ENCODE measurements at regions of chr1 and their contacts with region 1.

Region 1: GRCh38 chr1:171245458-171246064 is 2.7 kb upstream of the FMO1 start:
- DNase-seq: no peak
- ATAC-seq: peak in 3 of 4 donors; percentile 57 to 69 (median 59)
- H3K4me3 ChIP-seq: no peak overlapping the region
- H3K27ac ChIP-seq: no peak overlapping the region
- H3K4me1 ChIP-seq: peaks cover 0 to 2% (median 0%) of the 10 kb centered on the region in 12 donors
- H3K27me3 ChIP-seq: peaks cover 0 to 2% (median 0%) of the 10 kb centered on the region in 9 donors
- CTCF ChIP-seq: peak; percentile 47 to 75 (median 66)
- POLR2A ChIP-seq: no peak

Region 2: DNA sequence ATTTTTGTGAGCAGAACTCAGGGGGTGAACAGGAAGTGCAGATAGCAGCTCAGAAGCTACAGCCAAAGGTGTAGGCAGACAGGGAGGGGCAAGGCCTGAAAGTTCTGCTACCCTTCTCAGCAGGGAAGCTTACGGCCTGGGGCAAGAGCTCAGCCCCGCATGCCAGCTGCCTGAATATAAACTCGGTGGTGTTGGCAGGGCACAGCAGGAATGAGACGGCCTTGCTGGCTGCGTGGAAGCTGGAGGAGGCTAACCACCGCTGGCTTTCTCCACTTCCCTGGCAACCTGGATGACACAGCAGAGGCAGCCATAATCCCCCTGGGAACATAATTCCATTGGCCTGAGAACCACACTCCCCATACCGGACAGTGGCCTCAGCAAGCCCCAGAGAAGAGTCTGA is 157.8 kb after region 1 on chr1:
- intact Hi-C with region 1: loop called in 2 of 10 experiments (anchors 10 kb)
- DNase-seq: no peak
- ATAC-seq: no peak
- H3K4me3 ChIP-seq: no peak overlapping the region
- H3K27ac ChIP-seq: no peak overlapping the region
- H3K4me1 ChIP-seq: no peaks in the 10 kb centered on the region
- H3K27me3 ChIP-seq: no peaks in the 10 kb centered on the region
- CTCF ChIP-seq: no peak
- POLR2A ChIP-seq: no peak